ENCODE measurements at regions of chr3 and their contacts with region 1.

Region 1: GRCh38 chr3:172476347-172476746 is 28.1 kb upstream of the GHSR start:
- DNase-seq: no peak
- ATAC-seq: peak; percentile 45

Region 2: GRCh38 chr3:172666873-172667694 is 190.7 kb after region 1 on chr3:
- intact Hi-C with region 1: loop called in 1 of 2 experiments (anchors 10 kb)
- DNase-seq: peak; percentile 70 to 79
- ATAC-seq: peak; percentile 98

Region 3: DNA sequence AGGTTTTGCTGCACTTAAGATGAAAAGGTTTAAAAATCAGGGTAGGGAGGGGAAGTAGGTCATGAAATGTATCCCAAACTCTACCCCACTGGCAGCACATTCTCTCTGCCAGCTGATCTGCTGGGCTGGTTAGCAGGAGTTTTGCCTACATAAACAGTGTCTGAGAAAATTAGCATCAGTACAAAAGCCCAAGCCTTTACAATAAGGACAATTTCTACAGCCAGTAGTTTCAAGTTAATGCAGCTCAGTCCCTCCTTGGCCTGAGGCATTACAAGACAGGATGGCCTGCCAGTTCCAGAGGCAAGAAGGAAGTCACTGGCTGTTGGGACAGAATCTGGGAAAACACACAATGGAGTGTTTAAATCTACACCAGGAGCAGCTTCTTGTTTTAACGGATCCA is 201.7 kb after region 1 on chr3:
- intact Hi-C with region 1: no loop called
- DNase-seq: no peak
- ATAC-seq: no peak

Region 4: GRCh38 chr3:172982736-172983364 is 506.5 kb after region 1 on chr3:
- intact Hi-C with region 1: no loop called
- DNase-seq: no peak
- ATAC-seq: no peak